ENCODE measurements at regions of chr5 and their contacts with region 1.

Region 1: DNA sequence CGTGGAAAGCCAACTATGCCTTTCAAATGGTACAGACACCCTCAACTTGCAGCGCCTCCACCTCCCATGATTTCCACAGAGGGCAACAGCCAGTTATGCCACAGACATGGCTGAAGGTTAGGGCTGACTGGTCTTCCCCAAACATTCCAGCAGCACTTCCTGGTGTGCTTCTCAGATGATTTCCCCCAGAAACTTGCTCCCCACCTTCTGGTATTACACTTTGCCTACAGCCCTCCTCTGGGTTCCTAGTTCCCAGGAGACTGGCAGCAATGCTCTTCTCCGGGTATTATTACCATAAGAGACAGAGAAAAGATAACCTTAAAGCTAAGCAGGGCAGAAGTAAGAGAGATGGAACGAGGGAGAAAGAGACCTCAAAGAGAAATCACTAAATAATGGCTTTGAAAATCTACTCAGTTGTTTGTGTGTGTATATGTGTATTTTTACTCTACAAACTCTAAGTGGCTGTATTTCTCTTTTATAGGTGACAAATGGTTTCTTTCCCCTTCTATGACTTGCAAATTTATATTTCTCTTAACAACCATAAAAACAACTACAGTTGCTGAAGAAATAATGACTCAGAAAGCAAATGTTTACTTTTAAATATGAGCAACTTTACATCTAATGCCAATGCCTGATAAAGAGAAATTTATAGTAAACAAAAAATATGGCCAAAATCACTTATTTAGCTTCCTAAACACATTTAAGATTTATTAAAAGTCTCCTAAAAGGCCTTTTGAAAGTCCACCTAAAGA is 133.8 kb downstream of the PDE4D start:
- DNase-seq: no peak

Region 2: GRCh38 chr5:59525959-59526358 is 233.8 kb before region 1 on chr5:
- intact Hi-C with region 1: no loop called
- DNase-seq: no peak

Region 3: GRCh38 chr5:59790399-59791125 is 30.8 kb after region 1 on chr5:
- intact Hi-C with region 1: loop called (anchors 5 kb)
- DNase-seq: no peak